PC-9 (cell line): ENCODE measurements at regions of chr12 and their contacts with region 1.

Region 1: GRCh38 chr12:93645702-93646101 is 31.5 kb upstream of the CRADD start:
- DNase-seq: no peak
- H3K4me3 ChIP-seq: no peak overlapping the region
- H3K27ac ChIP-seq: no peak overlapping the region
- H3K4me1 ChIP-seq: no peaks in the 10 kb centered on the region
- H3K27me3 ChIP-seq: no peaks in the 10 kb centered on the region
- CTCF ChIP-seq: no peak

Region 2: DNA sequence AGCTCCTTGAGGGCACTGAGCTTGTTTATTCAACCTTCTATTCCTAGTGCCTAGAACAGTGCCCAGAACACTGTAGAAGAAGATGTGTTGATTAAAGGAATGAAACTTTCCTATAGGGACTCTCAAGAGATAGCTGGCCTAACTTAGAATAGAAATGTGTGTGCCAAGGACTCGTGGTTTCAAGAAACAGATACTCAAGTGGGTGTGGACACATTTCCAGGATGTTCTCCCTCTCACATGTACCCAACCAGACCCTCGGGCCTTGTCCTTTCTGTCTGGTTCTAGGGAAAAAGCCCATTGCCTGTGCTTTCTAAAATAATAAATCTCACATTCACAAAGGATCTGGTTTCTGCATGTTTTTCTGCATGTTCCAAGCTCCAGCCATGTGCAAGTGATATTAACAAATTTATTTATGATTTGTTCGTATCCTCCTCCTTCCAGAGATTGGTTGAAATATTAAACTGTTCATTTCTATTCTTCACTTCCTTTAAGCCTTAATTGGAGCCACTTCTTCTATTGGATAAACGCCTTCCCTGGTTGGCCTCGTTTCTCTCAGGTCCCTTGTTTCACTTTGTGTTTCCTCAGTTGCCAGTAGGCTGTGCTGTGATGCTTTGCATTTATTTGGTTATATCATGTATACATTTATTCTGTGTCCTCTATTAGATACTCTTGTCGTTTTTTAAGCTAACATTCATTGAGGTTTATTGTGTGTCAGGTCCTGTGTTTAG is 121.3 kb after region 1 on chr12:
- CTCF ChIA-PET with region 1: interaction called, 14 read pairs
- POLR2A ChIA-PET with region 1: no interaction called
- intact Hi-C with region 1: no loop called
- DNase-seq: peak in 1 of 2 experiments; percentile 20
- H3K4me3 ChIP-seq: no peak overlapping the region
- H3K27ac ChIP-seq: no peak overlapping the region
- H3K4me1 ChIP-seq: no peaks in the 10 kb centered on the region
- H3K27me3 ChIP-seq: no peaks in the 10 kb centered on the region
- CTCF ChIP-seq: peak; percentile 55